ENCODE measurements at regions of chr5 and their contacts with region 1.

Region 1: DNA sequence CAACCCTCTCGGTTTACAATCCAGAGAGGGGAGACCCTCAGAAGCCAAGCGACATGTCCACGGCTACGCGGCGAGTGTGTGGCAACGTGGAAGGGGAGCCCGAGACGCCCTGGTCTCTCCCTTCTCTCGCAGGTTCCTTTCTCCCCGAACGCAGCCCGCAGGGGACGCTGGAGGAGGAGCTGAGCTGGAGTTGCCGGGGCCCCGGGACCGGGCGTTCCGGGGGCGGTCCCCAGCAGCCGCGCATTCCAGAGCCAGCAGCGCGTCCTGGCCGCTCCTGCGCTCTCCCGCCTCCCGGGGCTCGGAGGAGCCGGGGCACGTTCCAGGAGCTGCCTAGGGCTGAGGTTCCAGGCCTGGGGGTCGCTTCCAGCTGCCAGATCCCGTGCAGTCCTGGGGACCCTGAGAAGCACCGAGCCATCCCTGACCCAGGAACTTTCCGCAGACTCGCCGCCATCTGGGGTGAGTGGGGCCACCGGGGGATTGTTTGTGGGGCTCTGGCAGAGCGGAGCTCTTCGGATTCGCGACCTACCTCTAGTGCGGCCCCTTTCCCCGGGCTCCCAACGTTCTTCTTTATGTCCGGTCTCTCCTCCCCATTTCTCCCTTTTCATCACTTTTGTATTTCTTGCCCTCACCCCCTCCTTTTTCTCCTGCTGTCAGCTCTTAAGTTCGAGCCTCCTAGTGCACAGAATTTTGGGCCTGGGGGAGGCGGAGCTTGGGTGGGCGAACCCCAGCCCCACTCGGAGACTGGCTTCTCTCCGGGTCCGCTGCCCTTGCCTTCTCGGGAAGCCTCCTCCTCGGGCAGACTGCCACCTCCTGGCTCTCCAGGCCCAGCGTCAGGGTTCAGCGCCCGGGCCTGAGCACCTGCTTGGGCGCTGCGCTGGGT is at the start of gene SMIM3:
- DNase-seq: peak; percentile 39 to 92
- H3K4me3 ChIP-seq: peak within 1 kb of the TSS; percentile 68 to 88
- H3K27ac ChIP-seq: peak within 1 kb of the TSS; percentile 97
- H3K4me1 ChIP-seq: peaks cover 26 to 39% of the 10 kb centered on the region in 2 donors
- H3K27me3 ChIP-seq: no peaks in the 10 kb centered on the region
- CTCF ChIP-seq: peak; percentile 14 to 48 (median 35)
- total RNA-seq, gene SMIM3: 52.4 TPM

Region 2: GRCh38 chr5:150155258-150156026 is 623.3 kb before region 1 on chr5 and contains the start of gene PDGFRB:
- intact Hi-C with region 1: loop called (anchors 10 kb)
- DNase-seq: peak; percentile 83 to 97
- H3K4me3 ChIP-seq: peak within 1 kb of the TSS; percentile 57 to 90
- H3K27ac ChIP-seq: peak within 1 kb of the TSS; percentile 98 to 99
- H3K4me1 ChIP-seq: peaks cover 38 to 60% of the 10 kb centered on the region in 2 donors
- H3K27me3 ChIP-seq: no peaks in the 10 kb centered on the region
- CTCF ChIP-seq: no peak
- total RNA-seq, gene PDGFRB: 341 TPM

Region 3: GRCh38 chr5:150700594-150701293 is 78.0 kb before region 1 on chr5 and contains the start of gene RBM22:
- intact Hi-C with region 1: loop called (anchors 2 kb)
- DNase-seq: peak; percentile 68 to 96
- H3K4me3 ChIP-seq: peak within 1 kb of the TSS; percentile 95 to 100
- H3K27ac ChIP-seq: peak within 1 kb of the TSS; percentile 97 to 99
- H3K4me1 ChIP-seq: peaks cover 4 to 10% of the 10 kb centered on the region in 2 donors
- H3K27me3 ChIP-seq: no peaks in the 10 kb centered on the region
- CTCF ChIP-seq: peak; percentile 62 to 78 (median 64)
- total RNA-seq, gene RBM22: 45.3 TPM

Region 4: GRCh38 chr5:150801117-150801927 is 22.6 kb after region 1 on chr5:
- intact Hi-C with region 1: loop called (anchors 1 kb)
- DNase-seq: no peak
- H3K4me3 ChIP-seq: peak overlapping the region; percentile 55 to 58
- H3K27ac ChIP-seq: peak overlapping the region; percentile 52 to 57
- H3K4me1 ChIP-seq: peaks cover 0 to 3% of the 10 kb centered on the region in 2 donors
- H3K27me3 ChIP-seq: no peaks in the 10 kb centered on the region
- CTCF ChIP-seq: peak; percentile 11 to 61 (median 22)

Region 5: GRCh38 chr5:150960791-150961396 is 182.1 kb after region 1 on chr5:
- intact Hi-C with region 1: no loop called
- DNase-seq: no peak
- H3K4me3 ChIP-seq: no peak overlapping the region
- H3K27ac ChIP-seq: no peak overlapping the region
- H3K4me1 ChIP-seq: no peaks in the 10 kb centered on the region
- H3K27me3 ChIP-seq: no peaks in the 10 kb centered on the region
- CTCF ChIP-seq: no peak

Region 6: GRCh38 chr5:151093476-151093889 is 314.7 kb after region 1 on chr5:
- intact Hi-C with region 1: no loop called
- DNase-seq: peak in 1 of 2 donors; percentile 84
- H3K4me3 ChIP-seq: no peak overlapping the region
- H3K27ac ChIP-seq: peak overlapping the region; percentile 77 to 85
- H3K4me1 ChIP-seq: peaks cover 19 to 31% of the 10 kb centered on the region in 2 donors
- H3K27me3 ChIP-seq: no peaks in the 10 kb centered on the region
- CTCF ChIP-seq: no peak

Region 7: GRCh38 chr5:151675611-151676313 is 897.0 kb after region 1 on chr5:
- intact Hi-C with region 1: loop called (anchors 10 kb)
- DNase-seq: no peak
- H3K4me3 ChIP-seq: peak overlapping the region in 1 of 2 donors; percentile 25
- H3K27ac ChIP-seq: peak overlapping the region; percentile 93 to 98
- H3K4me1 ChIP-seq: peaks cover 59 to 96% of the 10 kb centered on the region in 2 donors
- H3K27me3 ChIP-seq: no peaks in the 10 kb centered on the region
- CTCF ChIP-seq: no peak

Measured in ascending aorta (tissue), 2 donors.